ENCODE measurements at regions of chr3 and their contacts with region 1.

Region 1: DNA sequence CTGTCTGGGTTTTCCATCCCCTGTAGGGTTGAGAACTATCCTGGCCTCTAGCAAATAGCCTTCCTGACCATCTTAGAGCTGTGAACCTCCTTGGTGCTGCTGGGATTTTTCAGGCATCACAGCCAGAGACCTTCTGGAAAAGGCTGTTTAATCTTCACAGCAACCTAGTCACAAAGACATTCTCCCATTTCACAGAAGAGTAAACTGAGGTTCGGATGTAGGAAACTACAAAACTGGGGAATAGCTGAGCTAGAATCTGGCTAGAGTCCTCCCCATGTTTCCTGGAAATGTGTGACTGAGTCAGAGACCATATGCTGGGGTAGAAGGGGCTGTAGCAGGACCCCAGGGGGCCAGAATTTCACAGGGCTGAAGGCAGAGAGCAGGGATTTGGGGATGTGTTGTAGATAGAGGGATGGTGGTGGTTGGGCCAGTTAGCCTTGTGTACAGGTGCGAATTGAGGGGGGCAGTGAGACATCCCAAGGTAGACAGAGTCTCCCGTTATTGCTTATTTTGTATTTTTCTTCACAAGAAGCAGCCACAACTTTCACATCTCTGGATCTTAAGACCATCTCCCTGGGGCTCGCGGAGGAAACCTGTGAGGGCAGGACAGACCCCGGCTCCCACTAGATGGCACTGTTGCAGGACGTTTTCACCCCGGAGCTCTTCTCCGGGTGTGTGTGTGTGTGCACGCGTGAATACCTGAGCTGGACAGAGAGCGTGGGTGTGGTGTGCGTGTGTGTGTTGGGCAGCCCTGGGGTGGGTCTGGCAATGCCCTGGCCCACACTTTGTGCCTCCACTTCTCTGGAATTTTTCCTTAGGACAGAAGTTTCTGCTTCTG is 66.9 kb upstream of the PRR23C start:
- DNase-seq: peak; percentile 86
- H3K4me3 ChIP-seq: no peak overlapping the region
- H3K27ac ChIP-seq: no peak overlapping the region
- H3K4me1 ChIP-seq: no peaks in the 10 kb centered on the region
- H3K27me3 ChIP-seq: no peaks in the 10 kb centered on the region
- CTCF ChIP-seq: peak; percentile 60

Region 2: GRCh38 chr3:138493804-138494606 is 617.6 kb before region 1 on chr3:
- intact Hi-C with region 1: no loop called
- DNase-seq: no peak
- H3K4me3 ChIP-seq: no peak overlapping the region
- H3K27ac ChIP-seq: no peak overlapping the region
- H3K4me1 ChIP-seq: no peaks in the 10 kb centered on the region
- H3K27me3 ChIP-seq: no peaks in the 10 kb centered on the region
- CTCF ChIP-seq: no peak

Region 3: DNA sequence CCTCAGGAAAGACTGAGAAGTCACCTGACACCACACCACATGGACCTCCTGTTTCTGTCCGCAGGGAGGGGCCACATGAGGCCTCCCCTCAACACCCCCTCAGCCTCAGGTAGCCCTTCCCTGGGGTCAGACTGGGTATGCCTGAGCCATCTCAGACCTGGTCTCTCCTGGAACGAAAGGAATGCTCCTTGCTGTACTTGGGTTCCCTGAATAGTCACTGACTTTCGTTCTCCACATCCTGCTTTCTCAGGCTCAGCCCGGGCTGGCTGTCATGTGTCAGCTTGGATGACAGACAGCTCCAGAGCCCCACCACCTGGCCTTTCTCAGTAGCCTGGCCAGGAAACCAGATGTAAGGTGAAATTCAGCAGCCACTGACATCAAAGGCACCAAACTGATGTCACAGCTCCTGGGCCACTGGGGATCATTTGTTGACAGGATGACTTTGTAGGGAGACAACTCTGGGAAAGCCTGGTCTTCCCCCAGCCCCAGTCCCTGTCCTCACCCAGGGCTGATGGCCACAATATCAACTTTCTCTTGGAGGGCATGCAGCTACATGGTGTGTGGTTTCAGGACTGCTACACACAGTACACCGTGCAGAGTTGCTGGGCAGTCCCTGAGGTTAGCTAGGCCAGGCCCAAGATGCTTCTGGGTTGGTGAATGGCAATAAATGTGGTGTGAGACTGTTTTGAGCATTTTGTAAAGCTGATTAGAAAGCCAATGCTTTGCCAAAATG is 90.8 kb after region 1 on chr3:
- intact Hi-C with region 1: loop called (anchors 2 kb)
- DNase-seq: peak; percentile 76
- H3K4me3 ChIP-seq: no peak overlapping the region
- H3K27ac ChIP-seq: no peak overlapping the region
- H3K4me1 ChIP-seq: peaks cover 6% of the 10 kb centered on the region
- H3K27me3 ChIP-seq: no peaks in the 10 kb centered on the region
- CTCF ChIP-seq: peak; percentile 31

Region 4: DNA sequence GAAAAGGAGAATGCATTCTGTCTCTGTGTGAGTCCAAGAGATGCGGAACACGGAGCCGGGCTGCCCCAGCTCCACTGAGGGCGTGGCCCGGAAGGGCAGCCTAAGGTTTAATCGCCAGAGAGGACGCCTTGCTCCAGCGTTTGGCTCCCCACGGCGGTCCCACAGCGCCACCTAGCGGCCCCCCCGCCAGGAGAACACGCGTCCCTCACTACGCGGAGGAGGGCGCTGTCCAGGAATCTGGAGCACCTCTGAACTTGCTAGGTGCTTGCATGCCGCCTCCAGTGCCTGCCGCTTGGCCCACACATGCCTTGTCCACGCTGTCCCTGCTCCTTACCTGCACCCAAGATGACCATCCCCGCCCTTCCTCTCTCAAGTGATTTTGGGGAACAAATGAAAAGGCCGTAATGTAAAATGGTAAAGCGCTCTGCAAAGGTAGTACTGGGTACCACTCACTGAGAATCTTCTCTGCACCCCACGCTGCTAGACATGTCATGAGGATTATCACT is 217.8 kb after region 1 on chr3:
- intact Hi-C with region 1: loop called (anchors 2 kb)
- DNase-seq: peak; percentile 92
- H3K4me3 ChIP-seq: no peak overlapping the region
- H3K27ac ChIP-seq: no peak overlapping the region
- H3K4me1 ChIP-seq: no peaks in the 10 kb centered on the region
- H3K27me3 ChIP-seq: peaks cover 9% of the 10 kb centered on the region
- CTCF ChIP-seq: peak; percentile 99

Measured in colonic mucosa (tissue), 4 donors.